CD4-positive, alpha-beta memory T cell (primary cell): ENCODE measurements at regions of chr2 and their contacts with region 1.

Region 1: GRCh38 chr2:236512902-236513435 is 56.7 kb upstream of the ACKR3 start:
- DNase-seq: peak; percentile 58 to 72 (median 64)
- H3K4me3 ChIP-seq: no peak overlapping the region
- H3K4me3 Mint-ChIP-seq: no peak overlapping the region
- H3K27ac ChIP-seq: no peak overlapping the region
- H3K27ac Mint-ChIP-seq: no peak overlapping the region
- H3K4me1 ChIP-seq: peaks cover 9% of the 10 kb centered on the region
- H3K4me1 Mint-ChIP-seq: peaks cover 0 to 5% (median 3%) of the 10 kb centered on the region in 4 donors
- H3K27me3 ChIP-seq: no peaks in the 10 kb centered on the region
- H3K27me3 Mint-ChIP-seq: peaks cover 3 to 4% of the 10 kb centered on the region in 2 donors

Region 2: GRCh38 chr2:236146436-236146835 is 366.5 kb before region 1 on chr2:
- CTCF ChIA-PET with region 1: no interaction called
- POLR2A ChIA-PET with region 1: no interaction called
- intact Hi-C with region 1: no loop called
- DNase-seq: no peak
- H3K4me3 ChIP-seq: no peak overlapping the region
- H3K4me3 Mint-ChIP-seq: no peak overlapping the region
- H3K27ac ChIP-seq: no peak overlapping the region
- H3K27ac Mint-ChIP-seq: peak overlapping the region in 1 of 7 donors; percentile 26
- H3K4me1 ChIP-seq: no peaks in the 10 kb centered on the region
- H3K4me1 Mint-ChIP-seq: no peaks in the 10 kb centered on the region
- H3K27me3 ChIP-seq: no peaks in the 10 kb centered on the region
- H3K27me3 Mint-ChIP-seq: peaks cover 15 to 21% of the 10 kb centered on the region in 2 donors

Region 3: GRCh38 chr2:236526455-236527158 is 13.6 kb after region 1 on chr2:
- CTCF ChIA-PET with region 1: interaction called, 22 read pairs
- POLR2A ChIA-PET with region 1: no interaction called
- intact Hi-C with region 1: no loop called
- DNase-seq: no peak
- H3K4me3 ChIP-seq: no peak overlapping the region
- H3K4me3 Mint-ChIP-seq: no peak overlapping the region
- H3K27ac ChIP-seq: no peak overlapping the region
- H3K27ac Mint-ChIP-seq: no peak overlapping the region
- H3K4me1 ChIP-seq: no peaks in the 10 kb centered on the region
- H3K4me1 Mint-ChIP-seq: no peaks in the 10 kb centered on the region
- H3K27me3 ChIP-seq: no peaks in the 10 kb centered on the region
- H3K27me3 Mint-ChIP-seq: peaks cover 4 to 8% of the 10 kb centered on the region in 2 donors

Region 4: DNA sequence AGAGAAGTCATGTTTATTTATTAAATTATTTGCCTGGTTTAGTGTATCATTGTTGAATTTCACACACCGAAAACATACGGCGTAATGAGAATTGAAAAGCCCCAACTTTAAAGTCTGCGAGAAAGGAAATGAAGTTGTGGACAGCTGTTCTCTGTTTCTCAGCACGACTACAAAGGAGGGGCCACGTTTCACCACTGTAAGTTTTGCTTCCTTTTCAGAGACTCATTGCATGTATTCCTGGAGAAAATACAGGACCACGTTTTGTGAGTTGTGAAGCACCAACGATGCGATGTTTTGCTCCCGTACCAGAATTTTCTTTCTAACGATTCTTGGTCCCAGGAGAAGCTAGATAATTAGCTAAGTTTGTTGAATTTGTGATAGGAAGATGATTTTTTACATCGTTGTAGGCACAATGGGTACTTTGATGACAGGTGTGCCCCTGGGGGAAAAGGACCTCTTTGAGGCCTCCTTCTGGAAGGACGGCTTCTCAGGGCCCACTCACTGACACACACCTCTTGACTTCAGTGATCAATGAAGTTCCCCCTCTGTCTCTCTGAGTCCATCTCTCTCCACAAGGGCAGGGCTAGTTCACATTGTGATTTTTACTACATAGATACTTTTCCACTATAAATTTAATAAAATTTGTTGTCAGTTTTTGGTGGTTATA is 33.0 kb after region 1 on chr2:
- CTCF ChIA-PET with region 1: interaction called, 41 read pairs
- POLR2A ChIA-PET with region 1: interaction called, 12 read pairs
- intact Hi-C with region 1: no loop called
- DNase-seq: peak in 4 of 5 donors; percentile 20 to 32 (median 26)
- H3K4me3 ChIP-seq: no peak overlapping the region
- H3K4me3 Mint-ChIP-seq: peak overlapping the region; percentile 49 to 79 (median 73)
- H3K27ac ChIP-seq: peak overlapping the region; percentile 57
- H3K27ac Mint-ChIP-seq: peak overlapping the region; percentile 81 to 96 (median 86)
- H3K4me1 ChIP-seq: peaks cover 80% of the 10 kb centered on the region
- H3K4me1 Mint-ChIP-seq: peaks cover 79 to 97% (median 89%) of the 10 kb centered on the region in 4 donors
- H3K27me3 ChIP-seq: no peaks in the 10 kb centered on the region
- H3K27me3 Mint-ChIP-seq: no peaks in the 10 kb centered on the region

Region 5: DNA sequence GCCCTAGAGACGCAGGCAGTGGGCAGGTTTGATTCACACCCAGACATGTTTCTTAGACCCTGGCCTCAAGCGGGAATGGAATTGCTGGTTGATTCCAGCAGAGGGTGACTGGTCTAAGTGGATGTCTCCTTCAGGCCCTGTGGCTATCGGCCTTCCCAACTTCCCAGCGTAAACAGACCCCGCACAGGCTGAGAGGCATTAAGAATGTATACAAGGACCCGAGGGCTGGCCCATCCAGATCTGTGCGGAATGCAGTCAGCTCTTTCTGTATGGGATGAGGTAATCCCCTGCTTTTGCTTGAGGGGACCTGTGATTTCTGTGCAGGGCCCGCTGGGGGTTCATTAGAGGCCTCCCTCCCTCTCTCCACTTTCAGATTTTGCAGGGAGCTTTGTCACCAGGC is 63.1 kb after region 1 on chr2:
- CTCF ChIA-PET with region 1: interaction called, 410 read pairs
- POLR2A ChIA-PET with region 1: interaction called, 5 read pairs
- intact Hi-C with region 1: no loop called
- DNase-seq: no peak
- H3K4me3 ChIP-seq: no peak overlapping the region
- H3K4me3 Mint-ChIP-seq: no peak overlapping the region
- H3K27ac ChIP-seq: no peak overlapping the region
- H3K27ac Mint-ChIP-seq: no peak overlapping the region
- H3K4me1 ChIP-seq: no peaks in the 10 kb centered on the region
- H3K4me1 Mint-ChIP-seq: peaks cover 0 to 5% (median under 1%) of the 10 kb centered on the region in 4 donors
- H3K27me3 ChIP-seq: no peaks in the 10 kb centered on the region
- H3K27me3 Mint-ChIP-seq: no peaks in the 10 kb centered on the region

Region 6: GRCh38 chr2:237072067-237072931 is 559.3 kb after region 1 on chr2:
- CTCF ChIA-PET with region 1: interaction called, 3 read pairs
- POLR2A ChIA-PET with region 1: no interaction called
- intact Hi-C with region 1: loop called (anchors 1 kb)
- DNase-seq: peak; percentile 46 to 60 (median 51)
- H3K4me3 ChIP-seq: no peak overlapping the region
- H3K4me3 Mint-ChIP-seq: no peak overlapping the region
- H3K27ac ChIP-seq: no peak overlapping the region
- H3K27ac Mint-ChIP-seq: no peak overlapping the region
- H3K4me1 ChIP-seq: no peaks in the 10 kb centered on the region
- H3K4me1 Mint-ChIP-seq: no peaks in the 10 kb centered on the region
- H3K27me3 ChIP-seq: no peaks in the 10 kb centered on the region
- H3K27me3 Mint-ChIP-seq: no peaks in the 10 kb centered on the region